ENCODE measurements at regions of chr1 and their contacts with region 1.

Region 1: GRCh38 chr1:108559215-108560186 is at the start of gene EEIG2:
- DNase-seq: peak; percentile 91
- ATAC-seq: peak; percentile 88
- H3K4me3 Mint-ChIP-seq: peak within 1 kb of the TSS; percentile 95
- H3K27ac Mint-ChIP-seq: peak within 1 kb of the TSS; percentile 84
- H3K4me1 Mint-ChIP-seq: peaks cover 35% of the 10 kb centered on the region
- H3K27me3 Mint-ChIP-seq: no peaks in the 10 kb centered on the region
- CTCF ChIP-seq: peak; percentile 66
- total RNA-seq, gene EEIG2: 10.4 to 12.6 TPM

Region 2: GRCh38 chr1:108209430-108210108 is 349.9 kb before region 1 on chr1:
- CTCF ChIA-PET with region 1: interaction called, 3 read pairs
- POLR2A ChIA-PET with region 1: no interaction called
- intact Hi-C with region 1: loop called (anchors 10 kb)
- DNase-seq: peak; percentile 44
- ATAC-seq: peak; percentile 80
- H3K4me3 Mint-ChIP-seq: no peak overlapping the region
- H3K27ac Mint-ChIP-seq: no peak overlapping the region
- H3K4me1 Mint-ChIP-seq: peaks cover 10% of the 10 kb centered on the region
- H3K27me3 Mint-ChIP-seq: peaks cover 30% of the 10 kb centered on the region
- CTCF ChIP-seq: no peak

Region 3: DNA sequence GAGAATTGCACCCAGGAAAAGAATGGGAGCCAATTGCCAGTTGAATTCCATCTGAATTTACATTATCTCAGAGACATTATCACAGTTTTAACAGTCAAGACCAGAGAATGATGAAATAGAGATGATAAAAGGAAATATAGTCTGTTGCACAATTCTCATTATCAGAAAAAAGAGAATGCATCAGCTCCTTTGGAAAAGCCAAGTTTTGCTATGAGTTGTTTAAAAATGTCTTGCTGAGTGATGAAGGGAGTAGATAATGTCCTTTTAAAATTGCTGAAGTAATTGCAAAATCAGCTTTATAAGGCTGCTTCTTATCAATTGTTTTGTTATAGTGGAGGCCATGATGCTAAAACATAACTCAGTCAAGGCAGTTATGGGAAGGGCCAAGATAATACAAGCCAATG is 37.5 kb before region 1 on chr1:
- CTCF ChIA-PET with region 1: interaction called, 27 read pairs
- POLR2A ChIA-PET with region 1: interaction called, 3 read pairs
- intact Hi-C with region 1: no loop called
- DNase-seq: no peak
- ATAC-seq: no peak
- H3K4me3 Mint-ChIP-seq: no peak overlapping the region
- H3K27ac Mint-ChIP-seq: no peak overlapping the region
- H3K4me1 Mint-ChIP-seq: no peaks in the 10 kb centered on the region
- H3K27me3 Mint-ChIP-seq: peaks cover 15% of the 10 kb centered on the region
- CTCF ChIP-seq: no peak

Region 4: DNA sequence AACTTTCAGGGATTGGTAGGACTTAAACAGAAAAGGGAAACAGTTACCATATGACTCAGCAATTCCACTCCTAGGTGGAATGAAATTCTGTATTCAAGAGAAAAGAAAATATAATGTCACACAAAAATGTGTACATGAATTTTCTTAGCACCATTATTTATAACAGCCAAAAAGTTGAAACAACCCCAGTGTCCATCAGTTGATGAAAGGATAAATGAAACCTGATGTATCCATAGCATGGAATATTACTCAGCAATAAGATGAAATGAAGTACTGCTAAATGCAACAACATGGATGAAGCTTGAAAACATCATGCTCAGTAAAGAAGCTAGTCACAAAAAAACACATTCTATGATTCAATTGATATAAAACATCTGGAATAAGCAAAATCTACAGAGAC is 15.9 kb after region 1 on chr1:
- CTCF ChIA-PET with region 1: interaction called, 46 read pairs
- POLR2A ChIA-PET with region 1: interaction called, 4 read pairs
- intact Hi-C with region 1: no loop called
- DNase-seq: no peak
- ATAC-seq: no peak
- H3K4me3 Mint-ChIP-seq: no peak overlapping the region
- H3K27ac Mint-ChIP-seq: peak overlapping the region; percentile 30
- H3K4me1 Mint-ChIP-seq: peaks cover 11% of the 10 kb centered on the region
- H3K27me3 Mint-ChIP-seq: no peaks in the 10 kb centered on the region
- CTCF ChIP-seq: no peak

Region 5: GRCh38 chr1:108661030-108661620 is 101.6 kb after region 1 on chr1 and contains the start of gene HENMT1:
- CTCF ChIA-PET with region 1: interaction called, 13 read pairs
- POLR2A ChIA-PET with region 1: interaction called, 6 read pairs
- intact Hi-C with region 1: no loop called
- DNase-seq: peak; percentile 83
- ATAC-seq: peak; percentile 80
- H3K4me3 Mint-ChIP-seq: peak within 1 kb of the TSS; percentile 82
- H3K27ac Mint-ChIP-seq: peak within 1 kb of the TSS; percentile 96
- H3K4me1 Mint-ChIP-seq: peaks cover 40% of the 10 kb centered on the region
- H3K27me3 Mint-ChIP-seq: no peaks in the 10 kb centered on the region
- CTCF ChIP-seq: no peak
- total RNA-seq, gene HENMT1: 25.3 to 27.1 TPM

Measured in activated CD8-positive, alpha-beta T cell treated with anti-CD3 and anti-CD28 coated beads for 36 hours (primary cell).